ENCODE measurements at regions of chr17 and their contacts with region 1.

Region 1: GRCh38 chr17:68291844-68292695 is 775 bp downstream of the ARSG start:
- DNase-seq: peak; percentile 97
- ATAC-seq: peak; percentile 81
- H3K4me3 Mint-ChIP-seq: peak overlapping the region; percentile 85
- H3K27ac Mint-ChIP-seq: peak overlapping the region; percentile 97
- H3K4me1 Mint-ChIP-seq: peaks cover 73% of the 10 kb centered on the region
- H3K27me3 Mint-ChIP-seq: no peaks in the 10 kb centered on the region

Region 2: DNA sequence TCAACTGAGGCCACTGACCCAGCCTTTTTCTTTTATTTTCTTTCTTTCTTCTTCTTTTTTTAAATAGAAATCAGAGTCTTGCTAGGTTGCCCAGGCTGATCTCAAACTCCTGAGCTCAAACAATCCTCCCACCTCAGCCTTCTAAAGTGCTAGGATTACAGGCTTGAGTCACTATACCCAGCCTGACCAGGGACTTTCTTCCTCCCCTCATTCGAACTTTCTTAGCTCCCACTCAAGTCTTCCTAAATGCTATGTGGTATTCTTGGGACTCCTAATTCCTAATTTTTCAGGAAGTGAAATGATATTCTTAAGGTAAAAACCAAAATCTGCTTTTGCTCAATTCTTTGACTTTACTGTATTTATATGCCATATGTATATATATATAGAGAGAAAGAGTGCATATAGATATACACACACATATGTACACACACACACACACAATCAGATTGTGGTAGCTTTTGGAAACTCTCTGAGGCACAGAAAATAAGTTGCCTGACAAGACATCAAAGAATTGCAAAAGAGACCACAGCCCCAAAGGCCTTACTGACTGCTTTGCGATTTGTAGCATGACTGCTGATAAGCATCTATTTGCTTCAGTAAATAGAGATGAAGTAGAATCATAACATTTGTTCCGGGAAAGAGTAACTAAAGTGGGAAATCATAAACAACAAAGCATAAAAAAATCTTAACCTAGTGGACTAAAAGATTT is 53.8 kb before region 1 on chr17:
- CTCF ChIA-PET with region 1: no interaction called
- POLR2A ChIA-PET with region 1: interaction called, 16 read pairs
- DNase-seq: peak; percentile 58
- ATAC-seq: peak; percentile 61
- H3K4me3 Mint-ChIP-seq: peak overlapping the region; percentile 76
- H3K27ac Mint-ChIP-seq: peak overlapping the region; percentile 98
- H3K4me1 Mint-ChIP-seq: peaks cover 54% of the 10 kb centered on the region
- H3K27me3 Mint-ChIP-seq: no peaks in the 10 kb centered on the region

Region 3: DNA sequence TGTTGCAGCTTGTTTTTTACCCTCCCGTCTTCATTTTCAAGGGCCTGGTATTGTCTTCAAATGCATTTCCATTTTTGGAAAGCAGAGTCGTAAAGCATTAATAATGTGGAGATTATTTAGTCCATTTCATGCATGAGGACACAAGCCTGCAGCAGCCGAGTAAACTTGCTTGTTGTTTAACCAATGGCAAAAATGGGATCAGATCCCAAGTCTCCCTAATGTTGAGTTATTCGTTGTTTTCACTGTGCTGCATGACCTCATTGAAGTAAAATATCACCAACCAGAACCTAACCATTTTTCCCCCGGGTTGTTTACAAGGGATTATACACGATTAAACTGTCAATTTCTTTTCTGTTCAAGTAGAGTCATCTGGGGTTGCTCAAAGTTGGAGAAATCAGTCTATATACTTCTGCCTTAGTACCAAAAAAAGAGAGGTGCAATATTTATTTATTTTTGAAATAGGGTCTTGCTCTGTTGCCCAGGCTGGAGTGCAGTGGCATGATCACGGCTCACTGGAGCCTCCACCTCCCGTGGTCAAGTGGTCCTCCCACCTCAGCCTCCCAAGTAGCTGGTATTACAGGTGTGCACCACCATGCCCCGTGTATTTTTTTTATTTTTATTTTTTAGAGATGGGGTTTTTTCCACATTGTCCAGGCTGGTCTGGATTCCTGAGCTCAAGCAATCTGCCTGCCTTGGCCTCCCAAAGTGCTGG is 31.9 kb before region 1 on chr17:
- CTCF ChIA-PET with region 1: interaction called, 11 read pairs
- POLR2A ChIA-PET with region 1: interaction called, 6 read pairs
- DNase-seq: no peak
- ATAC-seq: no peak
- H3K4me3 Mint-ChIP-seq: peak overlapping the region; percentile 8
- H3K27ac Mint-ChIP-seq: peak overlapping the region; percentile 89
- H3K4me1 Mint-ChIP-seq: peaks cover 75% of the 10 kb centered on the region
- H3K27me3 Mint-ChIP-seq: no peaks in the 10 kb centered on the region

Region 4: GRCh38 chr17:68346448-68346847 is 54.4 kb after region 1 on chr17:
- CTCF ChIA-PET with region 1: interaction called, 9 read pairs
- POLR2A ChIA-PET with region 1: interaction called, 36 read pairs
- DNase-seq: peak; percentile 88
- ATAC-seq: peak; percentile 81
- H3K4me3 Mint-ChIP-seq: peak overlapping the region; percentile 77
- H3K27ac Mint-ChIP-seq: peak overlapping the region; percentile 100
- H3K4me1 Mint-ChIP-seq: peaks cover 77% of the 10 kb centered on the region
- H3K27me3 Mint-ChIP-seq: no peaks in the 10 kb centered on the region

Region 5: DNA sequence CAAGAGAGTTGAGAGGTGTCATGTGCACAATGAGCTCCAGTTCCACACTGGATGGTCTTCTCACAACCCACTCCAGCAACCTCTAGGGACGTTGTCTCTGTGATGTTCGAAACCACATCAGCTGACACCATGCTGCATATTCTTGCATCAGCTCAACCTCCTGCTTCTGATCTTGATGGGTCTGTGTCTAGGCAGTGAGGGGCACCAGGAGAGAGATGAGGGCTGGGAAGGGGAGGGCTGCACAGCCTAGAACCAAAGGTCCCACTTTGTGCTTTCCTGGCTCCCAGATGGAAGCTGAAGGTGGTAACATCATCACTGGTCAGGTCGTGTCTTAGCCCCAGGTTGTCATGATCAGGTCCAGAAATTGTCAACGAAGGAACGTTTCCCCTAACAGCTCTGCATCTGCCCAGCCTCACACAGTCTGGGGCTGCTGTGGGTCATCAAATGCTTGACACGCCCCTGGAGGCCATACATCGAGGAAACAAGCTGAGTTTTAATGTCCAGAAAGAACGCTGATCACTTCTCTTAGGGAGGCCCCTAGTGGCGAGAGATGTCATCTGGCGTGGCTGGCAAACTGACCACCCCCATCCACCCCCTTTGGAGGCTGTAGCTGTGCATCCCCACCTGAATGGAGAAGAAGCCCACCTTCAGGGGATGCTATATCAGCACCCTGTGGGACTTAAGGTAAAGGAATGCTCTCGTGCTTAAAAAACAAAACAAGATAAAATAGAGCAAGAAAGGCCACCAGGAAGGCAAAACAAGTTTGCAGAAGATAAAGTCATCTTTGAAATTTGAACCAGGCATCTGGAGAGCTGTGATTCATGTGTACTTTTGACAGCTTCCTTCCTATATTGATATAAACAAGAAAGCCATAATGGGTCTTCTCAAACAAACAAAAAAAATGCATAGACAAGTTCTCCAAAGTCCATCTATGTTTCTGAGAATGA is 106.9 kb after region 1 on chr17:
- CTCF ChIA-PET with region 1: interaction called, 28 read pairs
- POLR2A ChIA-PET with region 1: interaction called, 25 read pairs
- DNase-seq: peak; percentile 64
- ATAC-seq: peak; percentile 65
- H3K4me3 Mint-ChIP-seq: peak overlapping the region; percentile 43
- H3K27ac Mint-ChIP-seq: peak overlapping the region; percentile 96
- H3K4me1 Mint-ChIP-seq: peaks cover 39% of the 10 kb centered on the region
- H3K27me3 Mint-ChIP-seq: no peaks in the 10 kb centered on the region